ENCODE measurements at regions of chr10 and their contacts with region 1.

Region 1: DNA sequence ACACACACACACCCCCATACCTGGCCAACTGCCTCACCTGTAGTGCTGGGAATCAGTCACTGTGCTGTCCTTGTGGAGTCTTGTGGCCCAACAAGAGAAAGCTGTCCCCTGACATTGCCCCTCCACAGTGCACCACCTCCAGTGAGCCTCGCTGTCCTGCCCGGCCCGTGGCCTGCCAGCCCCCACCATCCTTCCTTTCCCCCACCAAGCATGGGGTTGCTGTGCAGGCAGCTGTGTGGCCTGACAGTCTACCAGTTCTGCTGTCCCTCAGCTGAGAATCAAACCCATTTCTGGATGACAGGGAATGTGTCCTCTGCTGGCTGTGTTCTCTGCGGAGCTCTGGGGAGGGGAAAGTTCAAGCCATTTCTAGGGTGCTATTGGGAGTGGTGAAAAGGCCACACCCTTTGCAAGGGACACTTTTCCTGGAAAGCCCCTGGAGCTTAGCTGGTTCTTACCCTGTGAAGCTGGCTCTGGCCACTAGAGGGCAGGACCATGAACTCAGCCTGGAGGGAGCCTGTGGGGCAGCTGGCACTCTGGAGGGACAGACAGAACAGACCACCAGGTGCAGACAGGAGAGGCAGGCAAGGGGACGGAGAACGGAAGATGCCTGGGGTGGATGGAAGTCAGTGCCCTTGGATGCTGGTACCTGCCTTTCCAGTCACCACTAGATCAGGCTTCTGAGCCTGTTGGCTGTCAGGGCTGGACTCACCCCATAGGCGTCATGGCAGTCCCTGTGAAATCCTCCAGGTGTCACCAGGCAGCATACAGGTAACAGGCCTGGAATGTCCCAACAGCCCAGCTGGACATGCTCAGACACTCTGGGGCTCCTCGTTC is 10.5 kb upstream of the MTPAP start:
- DNase-seq: peak; percentile 42 to 53 (median 47)
- H3K4me3 ChIP-seq: no peak overlapping the region
- H3K4me3 Mint-ChIP-seq: peak overlapping the region in 1 of 8 donors; percentile 9
- H3K27ac ChIP-seq: no peak overlapping the region
- H3K27ac Mint-ChIP-seq: no peak overlapping the region
- H3K4me1 ChIP-seq: peaks cover 4% of the 10 kb centered on the region
- H3K4me1 Mint-ChIP-seq: peaks cover 0 to 6% (median 0%) of the 10 kb centered on the region in 4 donors
- H3K27me3 ChIP-seq: no peaks in the 10 kb centered on the region
- H3K27me3 Mint-ChIP-seq: peaks cover 0 to 14% of the 10 kb centered on the region in 2 donors

Region 2: GRCh38 chr10:30080161-30080560 is 279.4 kb before region 1 on chr10:
- CTCF ChIA-PET with region 1: no interaction called
- POLR2A ChIA-PET with region 1: no interaction called
- intact Hi-C with region 1: no loop called
- DNase-seq: no peak
- H3K4me3 ChIP-seq: no peak overlapping the region
- H3K4me3 Mint-ChIP-seq: no peak overlapping the region
- H3K27ac ChIP-seq: no peak overlapping the region
- H3K27ac Mint-ChIP-seq: no peak overlapping the region
- H3K4me1 ChIP-seq: no peaks in the 10 kb centered on the region
- H3K4me1 Mint-ChIP-seq: peaks cover 0 to 1% (median 0%) of the 10 kb centered on the region in 4 donors
- H3K27me3 ChIP-seq: peaks cover 7% of the 10 kb centered on the region
- H3K27me3 Mint-ChIP-seq: peaks cover 16 to 42% of the 10 kb centered on the region in 2 donors

Region 3: DNA sequence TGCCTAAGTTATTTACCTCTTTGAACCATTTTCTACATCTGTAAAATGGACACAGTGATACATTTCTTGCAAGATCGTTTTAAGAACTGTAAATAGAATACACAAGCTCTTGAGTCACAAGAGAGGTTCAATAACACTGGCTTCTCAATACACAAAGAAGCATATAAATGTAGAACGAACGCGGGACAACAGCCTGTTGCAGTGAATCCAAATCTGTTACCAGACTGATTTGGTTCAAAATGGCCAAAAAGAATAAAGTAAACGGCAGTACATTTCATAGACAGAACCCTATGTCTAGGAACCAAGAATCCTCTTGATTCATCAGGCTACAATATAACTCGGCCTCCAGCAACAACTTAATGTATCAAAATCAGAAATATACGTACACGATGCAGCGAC is 11.2 kb before region 1 on chr10:
- CTCF ChIA-PET with region 1: interaction called, 41 read pairs
- POLR2A ChIA-PET with region 1: no interaction called
- intact Hi-C with region 1: no loop called
- DNase-seq: no peak
- H3K4me3 ChIP-seq: peak overlapping the region; percentile 82 to 96
- H3K4me3 Mint-ChIP-seq: peak overlapping the region; percentile 92 to 98 (median 94)
- H3K27ac ChIP-seq: peak overlapping the region; percentile 79
- H3K27ac Mint-ChIP-seq: peak overlapping the region; percentile 90 to 98 (median 94)
- H3K4me1 ChIP-seq: peaks cover 42% of the 10 kb centered on the region
- H3K4me1 Mint-ChIP-seq: peaks cover 35 to 60% (median 50%) of the 10 kb centered on the region in 4 donors
- H3K27me3 ChIP-seq: no peaks in the 10 kb centered on the region
- H3K27me3 Mint-ChIP-seq: no peaks in the 10 kb centered on the region

Region 4: DNA sequence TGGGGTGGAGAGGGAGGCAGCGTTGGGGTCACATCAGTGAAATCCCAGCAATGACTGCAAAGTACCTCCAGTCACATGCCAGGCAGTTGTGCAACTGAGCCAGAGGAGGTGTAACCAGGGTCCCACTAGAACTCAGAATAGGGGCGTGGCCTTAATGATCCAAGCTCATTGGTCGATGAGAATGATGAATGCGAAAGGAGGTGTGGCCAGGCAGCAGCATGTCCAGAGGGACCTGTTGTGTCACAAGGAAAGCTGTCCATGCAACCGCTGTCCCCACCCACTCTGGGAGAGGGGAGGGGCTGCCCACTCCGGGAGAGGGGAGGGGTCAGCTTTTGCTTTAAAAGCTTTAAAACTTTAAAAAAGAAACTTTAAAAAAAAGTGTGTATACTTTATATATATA is 14.8 kb after region 1 on chr10:
- CTCF ChIA-PET with region 1: interaction called, 30 read pairs
- POLR2A ChIA-PET with region 1: no interaction called
- intact Hi-C with region 1: no loop called
- DNase-seq: no peak
- H3K4me3 ChIP-seq: no peak overlapping the region
- H3K4me3 Mint-ChIP-seq: no peak overlapping the region
- H3K27ac ChIP-seq: no peak overlapping the region
- H3K27ac Mint-ChIP-seq: no peak overlapping the region
- H3K4me1 ChIP-seq: peaks cover 18% of the 10 kb centered on the region
- H3K4me1 Mint-ChIP-seq: peaks cover 0 to 18% (median 13%) of the 10 kb centered on the region in 4 donors
- H3K27me3 ChIP-seq: no peaks in the 10 kb centered on the region
- H3K27me3 Mint-ChIP-seq: peaks cover 0 to 5% of the 10 kb centered on the region in 2 donors